ENCODE measurements at regions of chr20 and their contacts with region 1.

Region 1: GRCh38 chr20:63394069-63394919 is 33.1 kb upstream of the CHRNA4 start:
- DNase-seq: peak; percentile 76

Region 2: DNA sequence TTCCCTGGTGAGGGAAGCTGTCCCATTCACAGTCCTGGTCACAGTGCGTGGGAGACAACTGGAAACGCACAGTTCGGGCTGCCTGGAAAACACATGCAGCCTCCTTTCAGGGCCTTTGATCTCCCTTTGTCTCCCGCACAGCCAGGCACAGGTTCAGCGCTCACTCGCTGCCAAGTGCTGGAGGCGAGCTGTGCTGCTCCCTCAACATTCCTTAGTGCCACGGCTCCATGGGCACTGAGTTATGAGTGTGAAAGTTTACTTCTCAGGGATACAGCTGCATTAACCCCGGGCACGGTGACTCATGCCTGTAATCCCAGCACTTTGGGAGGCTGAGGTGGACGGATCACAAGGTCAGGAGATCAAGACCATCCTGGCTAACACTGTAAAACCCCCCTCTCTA is 187.4 kb before region 1 on chr20:
- in situ Hi-C with region 1: loop called (anchors 10 kb)
- DNase-seq: no peak

Region 3: GRCh38 chr20:63223221-63224207 is 170.8 kb before region 1 on chr20:
- in situ Hi-C with region 1: no loop called
- DNase-seq: peak; percentile 48

Measured in G401 (cell line).